ENCODE measurements at regions of chr18 and their contacts with region 1.

Region 1: DNA sequence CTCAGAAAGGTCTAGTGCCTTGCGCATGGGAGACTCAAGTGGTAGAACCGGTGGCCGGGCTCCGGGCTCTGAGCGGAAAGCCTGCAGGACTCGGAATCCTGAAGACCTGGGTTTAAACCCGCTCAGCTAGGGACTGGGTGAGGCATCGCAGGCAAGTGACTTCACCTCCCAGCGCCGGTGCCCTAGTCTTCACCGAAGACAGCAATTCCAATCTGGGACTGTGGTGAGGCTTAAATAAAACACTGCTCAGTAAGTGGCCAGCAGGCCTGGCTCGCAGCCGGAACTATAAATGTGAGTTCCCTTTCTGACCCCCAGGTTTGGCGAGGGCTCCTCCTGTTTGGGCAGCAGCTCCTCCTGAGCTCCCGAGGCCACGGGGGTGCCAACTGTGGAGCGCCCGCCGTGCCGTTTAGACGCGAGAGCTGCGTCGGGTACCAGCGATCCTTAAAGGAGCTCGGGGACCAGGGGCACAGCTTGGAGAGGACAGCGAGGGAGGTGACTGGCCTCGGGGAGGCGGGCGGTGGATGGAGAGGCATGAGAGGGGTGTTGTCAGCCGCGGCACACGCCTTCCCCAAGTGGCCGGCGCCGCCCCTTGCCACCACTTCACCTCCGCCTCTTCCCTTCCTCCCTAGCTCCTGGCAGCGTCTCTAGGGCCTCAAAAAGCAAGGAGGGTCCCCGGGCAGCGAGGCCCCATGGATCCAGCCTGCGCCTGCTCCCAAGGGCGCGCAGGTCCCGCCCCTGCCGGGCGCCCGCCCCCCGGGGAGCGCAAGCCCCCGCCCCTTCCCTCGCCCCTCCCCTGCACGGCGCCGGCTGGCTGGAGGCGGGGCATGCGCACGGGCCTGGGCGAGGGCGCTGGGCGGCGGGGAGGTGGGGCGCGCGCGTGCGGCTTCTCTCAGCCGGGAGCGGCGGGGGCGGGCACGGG is 736 bp upstream of the MTCL1 start:
- DNase-seq: peak; percentile 86 to 91 (median 89)
- ATAC-seq: peak; percentile 93
- H3K4me3 ChIP-seq: no peak overlapping the region
- H3K4me1 ChIP-seq: peaks cover 4% of the 10 kb centered on the region
- CTCF ChIP-seq: no peak

Region 2: DNA sequence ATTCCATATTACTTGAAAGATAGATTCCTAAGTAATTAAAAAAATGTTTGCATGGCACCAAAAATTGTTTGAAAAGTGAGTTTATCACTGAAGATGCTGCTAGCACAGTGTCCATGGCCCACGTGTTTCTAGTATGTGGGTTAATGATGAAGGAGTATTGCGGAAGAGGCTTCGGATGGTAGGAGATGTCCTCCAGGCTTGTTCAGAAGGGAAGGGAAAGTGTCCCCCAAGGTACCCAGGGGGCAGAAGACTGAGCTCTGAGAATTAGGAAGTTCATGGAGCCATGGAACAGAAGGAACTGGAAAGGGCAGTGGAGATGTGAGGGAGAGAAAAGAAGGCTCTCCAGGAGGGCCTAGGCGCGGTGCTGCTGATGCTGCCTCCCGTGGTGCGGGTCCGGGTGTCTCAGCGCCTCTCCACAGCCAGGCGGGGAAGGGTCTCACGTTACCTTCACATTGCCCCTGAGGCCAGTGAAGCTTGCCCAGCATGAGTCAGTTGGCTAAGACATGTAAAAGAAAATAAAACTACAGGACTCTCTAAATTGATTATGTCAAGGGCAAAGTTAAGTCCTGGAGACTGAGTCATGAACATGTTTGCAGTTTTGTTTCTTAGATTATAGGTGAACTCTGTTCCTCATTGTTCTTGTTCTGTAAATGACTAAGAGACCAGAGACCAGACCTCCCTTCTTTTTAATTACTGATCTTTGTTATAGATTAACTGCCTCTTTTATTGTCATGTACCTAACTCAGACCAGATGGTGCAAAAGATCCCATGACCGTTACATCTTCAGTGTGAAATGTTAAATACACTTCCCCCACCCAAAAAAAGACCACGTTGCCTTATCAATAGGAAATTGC is 89.7 kb after region 1 on chr18:
- intact Hi-C with region 1: loop called in 1 of 2 experiments (anchors 10 kb)
- DNase-seq: peak in 1 of 3 donors; percentile 48
- ATAC-seq: peak; percentile 84
- H3K4me3 ChIP-seq: no peak overlapping the region
- H3K4me1 ChIP-seq: peaks cover 8% of the 10 kb centered on the region
- CTCF ChIP-seq: no peak

Region 3: DNA sequence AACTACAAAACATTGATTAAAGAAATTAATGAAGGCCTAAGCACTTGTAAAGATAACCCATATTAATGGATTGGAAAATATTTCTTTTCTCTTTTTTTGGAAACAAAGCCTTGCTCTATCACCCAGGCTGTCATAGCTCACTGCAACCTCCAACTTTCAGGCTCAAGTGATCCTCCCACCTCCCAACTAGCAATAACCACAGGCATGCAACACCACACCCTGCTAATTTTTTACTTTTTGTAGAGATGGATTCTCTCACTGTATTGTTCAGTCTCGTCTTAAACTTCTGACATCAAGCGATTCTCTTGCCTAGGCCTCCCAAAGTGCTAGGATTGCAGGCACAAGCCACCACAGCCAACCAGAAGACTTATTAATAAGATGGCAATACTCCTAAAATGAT is 324.5 kb after region 1 on chr18:
- intact Hi-C with region 1: no loop called
- DNase-seq: no peak
- ATAC-seq: no peak
- H3K4me3 ChIP-seq: no peak overlapping the region
- H3K4me1 ChIP-seq: no peaks in the 10 kb centered on the region
- CTCF ChIP-seq: no peak